ENCODE measurements at regions of chr5 and their contacts with region 1.

Region 1: GRCh38 chr5:91162534-91163381 is 220.4 kb downstream of the ARRDC3 start:
- DNase-seq: peak; percentile 96 to 99 (median 99)
- H3K4me3 ChIP-seq: peak overlapping the region in 1 of 3 experiments; percentile 54
- H3K4me3 Mint-ChIP-seq: peak overlapping the region in 1 of 2 donors; percentile 75
- H3K27ac ChIP-seq: peak overlapping the region; percentile 91 to 95
- H3K27ac Mint-ChIP-seq: peak overlapping the region; percentile 97 to 100 (median 99)
- H3K4me1 ChIP-seq: peaks cover 29 to 35% of the 10 kb centered on the region in 2 donors
- H3K4me1 Mint-ChIP-seq: peaks cover 32% of the 10 kb centered on the region
- H3K27me3 ChIP-seq: no peaks in the 10 kb centered on the region
- H3K27me3 Mint-ChIP-seq: peaks cover 0 to 4% (median 0%) of the 10 kb centered on the region in 3 donors
- CTCF ChIP-seq: no peak

Region 2: GRCh38 chr5:91311697-91312501 is 149.1 kb after region 1 on chr5:
- intact Hi-C with region 1: loop called in 1 of 2 experiments (anchors 5 kb)
- DNase-seq: peak; percentile 93 to 97 (median 97)
- H3K4me3 ChIP-seq: peak overlapping the region; percentile 16 to 70 (median 29)
- H3K4me3 Mint-ChIP-seq: peak overlapping the region; percentile 60 to 87
- H3K27ac ChIP-seq: peak overlapping the region; percentile 97 to 99
- H3K27ac Mint-ChIP-seq: peak overlapping the region; percentile 97 to 100 (median 99)
- H3K4me1 ChIP-seq: peaks cover 82 to 86% of the 10 kb centered on the region in 2 donors
- H3K4me1 Mint-ChIP-seq: peaks cover 78% of the 10 kb centered on the region
- H3K27me3 ChIP-seq: no peaks in the 10 kb centered on the region
- H3K27me3 Mint-ChIP-seq: no peaks in the 10 kb centered on the region
- CTCF ChIP-seq: no peak

Region 3: GRCh38 chr5:91383027-91383955 is 220.5 kb after region 1 on chr5 and contains the start of gene ARRDC3:
- intact Hi-C with region 1: loop called (anchors 2 to 5 kb)
- DNase-seq: peak; percentile 92 to 96 (median 93)
- H3K4me3 ChIP-seq: peak within 1 kb of the TSS; percentile 88 to 100 (median 98)
- H3K4me3 Mint-ChIP-seq: peak within 1 kb of the TSS; percentile 97 to 98
- H3K27ac ChIP-seq: peak within 1 kb of the TSS; percentile 99 to 100
- H3K27ac Mint-ChIP-seq: peak within 1 kb of the TSS; percentile 88 to 99 (median 97)
- H3K4me1 ChIP-seq: peaks cover 20 to 25% of the 10 kb centered on the region in 2 donors
- H3K4me1 Mint-ChIP-seq: peaks cover 15% of the 10 kb centered on the region
- H3K27me3 ChIP-seq: no peaks in the 10 kb centered on the region
- H3K27me3 Mint-ChIP-seq: no peaks in the 10 kb centered on the region
- CTCF ChIP-seq: no peak
- polyA plus RNA-seq, gene ARRDC3: 43.3 to 68.0 (median 64.6) TPM

Measured in CD14-positive monocyte (primary cell).